ENCODE measurements at regions of chr1 and their contacts with region 1.

Region 1: DNA sequence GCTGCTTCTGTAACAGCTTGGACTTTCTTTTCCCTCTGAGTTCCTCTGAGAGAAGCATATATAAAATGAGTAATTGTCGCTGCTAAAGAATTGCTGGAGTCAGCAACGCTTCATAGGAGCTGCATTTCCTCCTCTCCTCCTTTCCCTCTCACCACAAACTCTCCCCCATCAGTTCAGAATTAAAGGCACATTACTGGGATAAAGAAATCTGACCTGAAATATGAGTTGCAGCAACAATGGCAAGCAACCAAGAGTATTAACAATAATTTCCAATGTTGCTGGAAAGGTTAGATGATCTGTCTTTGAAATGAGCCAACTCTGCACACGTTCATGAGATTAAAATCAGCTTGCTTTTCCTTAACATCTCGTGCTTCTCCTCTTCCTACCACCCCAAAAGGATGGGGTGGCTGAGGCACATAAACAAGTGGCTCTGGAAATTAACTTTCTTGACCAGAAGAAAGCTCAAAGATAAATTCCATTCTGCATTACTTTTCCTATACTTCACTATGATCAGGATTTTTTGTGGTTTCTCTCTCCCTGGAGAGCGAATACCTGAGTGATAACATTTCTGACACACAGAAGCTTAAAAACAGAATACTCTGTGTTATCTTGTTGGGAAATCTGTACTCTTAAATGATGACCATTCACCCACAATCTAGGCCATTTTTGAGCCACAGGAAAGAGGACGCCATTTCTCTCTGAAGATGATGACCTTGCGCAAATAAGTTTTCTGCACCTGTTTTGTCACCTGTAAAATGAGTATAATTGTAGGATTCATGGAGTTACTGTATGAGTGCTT is 90.2 kb downstream of the TGFBR3 start:
- DNase-seq: no peak
- ATAC-seq: no peak
- H3K4me3 ChIP-seq: no peak overlapping the region
- H3K27ac ChIP-seq: peak overlapping the region in 3 of 4 donors; percentile 35 to 64 (median 59)
- H3K4me1 ChIP-seq: peaks cover 71 to 79% of the 10 kb centered on the region in 2 donors
- H3K27me3 ChIP-seq: no peaks in the 10 kb centered on the region
- CTCF ChIP-seq: no peak
- POLR2A ChIP-seq: no peak

Region 2: GRCh38 chr1:91189096-91189495 is 606.7 kb before region 1 on chr1:
- in situ Hi-C with region 1: no loop called
- intact Hi-C with region 1: no loop called
- DNase-seq: no peak
- ATAC-seq: no peak
- H3K4me3 ChIP-seq: no peak overlapping the region
- H3K27ac ChIP-seq: no peak overlapping the region
- H3K4me1 ChIP-seq: no peaks in the 10 kb centered on the region
- H3K27me3 ChIP-seq: no peaks in the 10 kb centered on the region
- CTCF ChIP-seq: no peak
- POLR2A ChIP-seq: no peak

Region 3: GRCh38 chr1:91622616-91623015 is 173.2 kb before region 1 on chr1:
- in situ Hi-C with region 1: no loop called
- intact Hi-C with region 1: loop called (anchors 10 kb)
- DNase-seq: peak; percentile 55 to 84
- ATAC-seq: peak; percentile 81
- H3K4me3 ChIP-seq: no peak overlapping the region
- H3K27ac ChIP-seq: peak overlapping the region in 1 of 4 donors; percentile 17
- H3K4me1 ChIP-seq: peaks cover 19 to 27% of the 10 kb centered on the region in 2 donors
- H3K27me3 ChIP-seq: no peaks in the 10 kb centered on the region
- CTCF ChIP-seq: no peak
- POLR2A ChIP-seq: no peak

Region 4: DNA sequence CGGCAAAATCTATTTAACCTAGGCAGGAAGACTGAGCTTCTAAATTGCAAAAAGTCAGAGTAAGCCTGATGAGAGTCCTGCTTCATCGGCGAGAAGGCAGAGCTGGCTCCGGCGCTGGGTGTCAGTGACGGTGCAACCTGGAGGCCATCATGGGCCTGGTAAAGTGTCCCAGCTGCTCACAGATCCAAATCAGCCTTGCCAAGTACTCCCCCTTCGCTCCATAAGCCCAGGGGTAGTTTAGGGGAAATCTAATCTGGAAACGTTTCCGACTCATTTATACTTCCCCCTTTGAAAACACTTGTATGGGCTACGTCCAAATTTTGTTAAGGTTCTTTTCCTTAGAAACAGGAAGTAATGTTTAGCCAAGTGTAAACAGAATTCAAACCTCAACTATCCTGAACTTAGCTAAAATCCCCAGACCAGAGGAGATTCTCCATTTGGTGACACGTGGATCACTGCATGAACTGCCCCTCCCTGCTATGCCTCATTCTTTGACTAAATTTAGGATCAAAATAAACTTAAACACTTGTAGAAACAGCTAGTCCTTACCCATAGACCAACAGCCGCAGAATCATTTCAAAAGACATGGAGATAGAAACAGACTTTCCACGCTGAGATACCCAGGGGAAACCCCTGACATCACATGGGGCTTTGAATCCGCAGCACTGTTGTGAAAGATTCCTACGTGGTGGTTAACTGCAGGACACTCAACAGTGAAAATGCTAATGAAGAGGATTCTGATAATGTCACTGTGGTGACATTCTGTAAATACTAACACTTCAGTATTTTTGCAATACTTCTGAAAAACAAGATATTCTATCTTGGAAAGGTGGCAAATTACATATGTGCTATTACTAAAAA is 82.6 kb before region 1 on chr1:
- in situ Hi-C with region 1: no loop called
- intact Hi-C with region 1: no loop called
- DNase-seq: peak in 1 of 2 donors; percentile 61
- ATAC-seq: peak; percentile 73 to 87
- H3K4me3 ChIP-seq: peak overlapping the region in 2 of 4 donors; percentile 10 to 19
- H3K27ac ChIP-seq: peak overlapping the region; percentile 67 to 75 (median 72)
- H3K4me1 ChIP-seq: peaks cover 9 to 19% of the 10 kb centered on the region in 2 donors
- H3K27me3 ChIP-seq: no peaks in the 10 kb centered on the region
- CTCF ChIP-seq: no peak
- POLR2A ChIP-seq: peak in 1 of 2 donors; percentile 41

Region 5: GRCh38 chr1:91830242-91831131 is 34.7 kb after region 1 on chr1:
- in situ Hi-C with region 1: no loop called
- intact Hi-C with region 1: loop called (anchors 5 kb)
- DNase-seq: peak in 1 of 2 donors; percentile 35
- ATAC-seq: peak in 1 of 2 donors; percentile 57
- H3K4me3 ChIP-seq: no peak overlapping the region
- H3K27ac ChIP-seq: peak overlapping the region; percentile 2 to 38 (median 20)
- H3K4me1 ChIP-seq: peaks cover 41 to 46% of the 10 kb centered on the region in 2 donors
- H3K27me3 ChIP-seq: no peaks in the 10 kb centered on the region
- CTCF ChIP-seq: peak in 1 of 5 experiments; percentile 9
- POLR2A ChIP-seq: no peak

Region 6: GRCh38 chr1:91900538-91900937 is 104.7 kb after region 1 on chr1:
- in situ Hi-C with region 1: no loop called
- intact Hi-C with region 1: no loop called
- DNase-seq: no peak
- ATAC-seq: peak; percentile 90 to 95
- H3K4me3 ChIP-seq: no peak overlapping the region
- H3K27ac ChIP-seq: no peak overlapping the region
- H3K4me1 ChIP-seq: peaks cover 11 to 26% of the 10 kb centered on the region in 2 donors
- H3K27me3 ChIP-seq: no peaks in the 10 kb centered on the region
- CTCF ChIP-seq: no peak
- POLR2A ChIP-seq: no peak